IMR-90 (cell line): ENCODE measurements at regions of chr1 and their contacts with region 1.

Region 1: GRCh38 chr1:6489799-6490180 is 1.7 kb downstream of the PLEKHG5 start:
- DNase-seq: peak; percentile 69
- ATAC-seq: peak; percentile 77
- H3K4me3 ChIP-seq: peak overlapping the region; percentile 66
- H3K27ac ChIP-seq: peak overlapping the region; percentile 42
- H3K4me1 ChIP-seq: peaks cover 12% of the 10 kb centered on the region
- H3K27me3 ChIP-seq: no peaks in the 10 kb centered on the region
- CTCF ChIP-seq: peak; percentile 86
- POLR2A ChIP-seq: no peak
- RAD21 ChIP-seq: peak; percentile 65

Region 2: GRCh38 chr1:6523566-6523965 is 33.8 kb after region 1 on chr1:
- CTCF ChIA-PET with region 1: no interaction called
- POLR2A ChIA-PET with region 1: no interaction called
- dilution Hi-C with region 1: no loop called
- in situ Hi-C with region 1: no loop called
- intact Hi-C with region 1: loop called (anchors 1 kb)
- DNase-seq: peak; percentile 37
- ATAC-seq: peak; percentile 38; the same call in 1 of the 2 replicates
- H3K4me3 ChIP-seq: no peak overlapping the region
- H3K27ac ChIP-seq: no peak overlapping the region
- H3K4me1 ChIP-seq: peaks cover 5% of the 10 kb centered on the region; the same call in 1 of the 2 replicates
- H3K27me3 ChIP-seq: no peaks in the 10 kb centered on the region
- CTCF ChIP-seq: peak; percentile 60
- POLR2A ChIP-seq: no peak
- RAD21 ChIP-seq: peak; percentile 64

Region 3: GRCh38 chr1:6554031-6554906 is 64.5 kb after region 1 on chr1 and contains the start of gene NOL9:
- CTCF ChIA-PET with region 1: no interaction called
- POLR2A ChIA-PET with region 1: no interaction called
- dilution Hi-C with region 1: no loop called
- in situ Hi-C with region 1: no loop called
- intact Hi-C with region 1: loop called (anchors 1 kb)
- DNase-seq: peak; percentile 85
- ATAC-seq: peak; percentile 99
- H3K4me3 ChIP-seq: peak within 1 kb of the TSS; percentile 75
- H3K27ac ChIP-seq: peak within 1 kb of the TSS; percentile 64; the same call in 1 of the 2 replicates
- H3K4me1 ChIP-seq: peaks cover 5% of the 10 kb centered on the region
- H3K27me3 ChIP-seq: no peaks in the 10 kb centered on the region
- CTCF ChIP-seq: peak; percentile 92
- POLR2A ChIP-seq: peak; percentile 80
- RAD21 ChIP-seq: peak; percentile 75
- total RNA-seq, gene NOL9: 19.2 and 21.4 TPM in 2 replicates

Region 4: GRCh38 chr1:6613361-6614018 is 123.7 kb after region 1 on chr1 and contains the start of gene PHF13:
- CTCF ChIA-PET with region 1: no interaction called
- POLR2A ChIA-PET with region 1: no interaction called
- dilution Hi-C with region 1: no loop called
- in situ Hi-C with region 1: no loop called
- intact Hi-C with region 1: no loop called
- DNase-seq: peak; percentile 99
- ATAC-seq: peak; percentile 91
- H3K4me3 ChIP-seq: peak within 1 kb of the TSS; percentile 97
- H3K27ac ChIP-seq: peak within 1 kb of the TSS; percentile 93
- H3K4me1 ChIP-seq: peaks cover 5% of the 10 kb centered on the region
- H3K27me3 ChIP-seq: no peaks in the 10 kb centered on the region
- CTCF ChIP-seq: no peak
- POLR2A ChIP-seq: 0 out of 2 replicates have a peak, but pooled peaks have one; percentile 43
- RAD21 ChIP-seq: no peak
- total RNA-seq, gene PHF13: 7.3 and 9.4 TPM in 2 replicates

Region 5: GRCh38 chr1:6646499-6647148 is 156.8 kb after region 1 on chr1:
- CTCF ChIA-PET with region 1: interaction called, 3 read pairs
- POLR2A ChIA-PET with region 1: no interaction called
- dilution Hi-C with region 1: no loop called
- in situ Hi-C with region 1: loop called (anchors 10 kb)
- intact Hi-C with region 1: loop called (anchors 1 kb)
- DNase-seq: peak; percentile 54
- ATAC-seq: peak; percentile 87
- H3K4me3 ChIP-seq: no peak overlapping the region
- H3K27ac ChIP-seq: no peak overlapping the region
- H3K4me1 ChIP-seq: no peaks in the 10 kb centered on the region
- H3K27me3 ChIP-seq: no peaks in the 10 kb centered on the region
- CTCF ChIP-seq: peak; percentile 69
- POLR2A ChIP-seq: no peak
- RAD21 ChIP-seq: peak; percentile 78

Region 6: DNA sequence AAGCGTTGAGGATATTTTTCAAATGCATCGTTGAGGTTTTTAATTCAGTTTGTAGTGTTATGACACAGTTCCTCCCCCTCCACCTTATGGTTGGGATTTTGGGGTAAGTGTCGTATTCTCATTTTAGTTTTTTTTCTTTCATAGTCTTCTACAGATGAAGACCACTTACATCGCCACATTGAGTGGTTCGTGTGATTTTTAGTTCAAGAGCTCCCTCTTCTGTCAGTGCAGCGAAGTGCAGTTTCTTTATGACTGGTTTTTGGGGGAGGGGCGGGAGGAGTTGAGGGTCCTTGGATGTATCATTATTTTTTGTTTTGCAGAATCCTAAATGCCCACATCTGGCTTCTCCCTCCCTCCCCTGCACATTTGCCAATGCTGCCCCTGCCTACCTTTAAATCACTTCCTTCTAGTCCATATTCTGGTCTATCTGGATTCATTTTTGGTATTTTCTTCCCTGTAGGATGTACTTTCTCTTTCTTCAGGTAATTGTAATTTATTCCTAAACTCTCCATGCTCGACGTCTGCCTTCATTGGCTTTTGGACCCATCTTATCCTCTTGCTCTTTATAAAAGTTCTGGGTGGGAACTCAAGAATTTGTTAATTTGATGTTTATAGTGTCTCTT is 728.5 kb after region 1 on chr1:
- CTCF ChIA-PET with region 1: no interaction called
- POLR2A ChIA-PET with region 1: no interaction called
- dilution Hi-C with region 1: no loop called
- in situ Hi-C with region 1: no loop called
- intact Hi-C with region 1: loop called (anchors 5 kb)
- DNase-seq: peak; percentile 63
- ATAC-seq: peak; percentile 67; the same call in 1 of the 2 replicates
- H3K4me3 ChIP-seq: no peak overlapping the region
- H3K27ac ChIP-seq: no peak overlapping the region
- H3K4me1 ChIP-seq: peaks cover 3% of the 10 kb centered on the region
- H3K27me3 ChIP-seq: no peaks in the 10 kb centered on the region
- CTCF ChIP-seq: peak; percentile 77
- POLR2A ChIP-seq: no peak
- RAD21 ChIP-seq: peak; percentile 78